ENCODE measurements at regions of chr14 and their contacts with region 1.

Region 1: GRCh38 chr14:99320105-99320572 is 48.1 kb upstream of the BCL11B start:
- DNase-seq: no peak
- H3K4me3 ChIP-seq: no peak overlapping the region
- CTCF ChIP-seq: peak; percentile 89

Region 2: DNA sequence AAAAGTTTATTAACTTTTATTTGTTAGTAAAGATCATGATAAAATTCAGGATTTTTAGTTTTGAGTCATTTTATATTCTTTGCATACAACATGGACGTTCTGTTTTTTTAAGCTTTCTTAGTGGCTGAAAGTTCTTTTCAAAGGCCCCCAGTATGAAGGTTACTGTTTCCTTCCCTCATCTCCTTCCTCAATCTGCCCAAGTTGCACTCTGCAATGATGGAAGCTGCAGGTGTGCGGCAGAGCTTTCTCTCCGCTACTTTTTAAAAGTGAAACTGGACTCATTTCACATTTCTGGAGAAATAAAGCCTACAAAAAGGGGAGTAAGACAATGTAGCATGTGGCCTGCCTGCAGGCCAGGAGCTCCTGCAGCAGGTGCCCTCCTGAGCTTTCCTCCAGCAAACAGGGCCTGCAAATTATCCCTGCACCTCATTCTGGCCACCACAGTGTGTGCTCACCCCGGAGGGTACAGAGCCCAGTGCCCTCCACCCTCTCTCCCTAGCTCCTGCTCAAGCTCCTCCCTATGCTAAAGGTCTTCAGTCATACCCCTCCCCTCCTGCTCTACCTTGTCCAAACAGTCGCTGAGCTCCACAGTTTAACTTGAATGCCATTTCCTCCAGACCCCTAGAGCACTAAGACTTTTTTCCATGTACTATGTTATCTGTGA is 81.6 kb after region 1 on chr14:
- CTCF ChIA-PET with region 1: interaction called, 10 read pairs
- POLR2A ChIA-PET with region 1: no interaction called
- DNase-seq: no peak
- H3K4me3 ChIP-seq: no peak overlapping the region
- CTCF ChIP-seq: no peak

Region 3: GRCh38 chr14:99475179-99475578 is 155.0 kb after region 1 on chr14:
- CTCF ChIA-PET with region 1: no interaction called
- POLR2A ChIA-PET with region 1: no interaction called
- DNase-seq: no peak
- H3K4me3 ChIP-seq: no peak overlapping the region
- CTCF ChIP-seq: no peak